Panc1 (cell line): ENCODE measurements at regions of chr10 and their contacts with region 1.

Region 1: GRCh38 chr10:128865436-128866195 is 601.4 kb upstream of the MGMT start:
- DNase-seq: no peak
- ATAC-seq: no peak
- H3K4me3 ChIP-seq: no peak overlapping the region
- H3K27ac ChIP-seq: no peak overlapping the region
- H3K4me1 ChIP-seq: no peaks in the 10 kb centered on the region
- H3K27me3 ChIP-seq: peaks cover 10% of the 10 kb centered on the region
- CTCF ChIP-seq: no peak

Region 2: GRCh38 chr10:128850647-128851046 is 15.0 kb before region 1 on chr10:
- CTCF ChIA-PET with region 1: interaction called, 12 read pairs
- POLR2A ChIA-PET with region 1: no interaction called
- in situ Hi-C with region 1: no loop called
- intact Hi-C with region 1: no loop called
- DNase-seq: no peak
- ATAC-seq: no peak
- H3K4me3 ChIP-seq: no peak overlapping the region
- H3K27ac ChIP-seq: no peak overlapping the region
- H3K4me1 ChIP-seq: no peaks in the 10 kb centered on the region
- H3K27me3 ChIP-seq: peaks cover 3% of the 10 kb centered on the region; the same call in 1 of the 2 replicates
- CTCF ChIP-seq: no peak